Endothelial cell of umbilical vein (primary cell): ENCODE measurements at regions of chr6 and their contacts with region 1.

Region 1: DNA sequence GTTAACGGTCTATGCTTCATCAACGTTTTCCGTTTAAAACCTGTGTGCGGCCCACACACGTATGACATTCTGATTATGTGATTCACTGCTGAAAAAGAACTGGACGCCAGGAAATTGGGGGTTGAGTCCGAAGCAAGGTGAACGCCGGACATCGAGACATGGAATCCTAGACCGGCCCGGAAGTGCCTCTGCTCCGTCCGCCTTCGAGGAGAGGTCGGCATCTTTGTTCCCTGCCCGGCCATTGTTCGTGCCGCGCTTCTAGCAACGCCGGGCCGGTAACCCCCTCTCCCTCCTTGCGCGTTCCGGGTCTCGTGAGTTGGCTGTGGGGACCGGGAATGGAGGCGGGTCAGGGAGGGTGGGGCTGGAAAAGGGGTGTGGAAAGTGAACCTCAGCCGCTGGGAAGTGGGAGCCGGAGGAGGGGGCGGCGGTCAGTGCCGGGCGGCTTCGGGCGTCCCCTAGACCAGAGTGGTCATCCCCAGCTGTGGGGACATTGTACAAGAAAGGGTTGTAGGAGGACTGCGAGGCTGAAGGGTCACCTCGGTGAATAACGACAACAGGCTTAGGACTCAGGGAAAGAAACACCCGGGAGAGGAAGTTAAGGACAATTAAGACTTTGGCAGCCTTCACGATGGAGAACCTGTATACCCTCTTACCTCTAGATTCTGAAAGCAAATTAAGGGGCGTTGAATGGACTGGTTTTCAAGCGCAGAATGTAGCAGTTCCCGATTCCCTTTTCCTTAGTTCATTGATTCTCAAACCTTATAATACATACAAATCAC is at the start of gene ZSCAN9:
- DNase-seq: peak; percentile 89
- H3K4me3 ChIP-seq: peak within 1 kb of the TSS; percentile 48 to 99 (median 86)
- H3K27ac ChIP-seq: peak within 1 kb of the TSS; percentile 77
- H3K4me1 ChIP-seq: peaks cover 10% of the 10 kb centered on the region
- H3K27me3 ChIP-seq: no peaks in the 10 kb centered on the region
- CTCF ChIP-seq: no peak
- POLR2A ChIP-seq: peak; percentile 82
- total RNA-seq, gene ZSCAN9: 18.0 and 18.6 TPM in 2 replicates

Region 2: DNA sequence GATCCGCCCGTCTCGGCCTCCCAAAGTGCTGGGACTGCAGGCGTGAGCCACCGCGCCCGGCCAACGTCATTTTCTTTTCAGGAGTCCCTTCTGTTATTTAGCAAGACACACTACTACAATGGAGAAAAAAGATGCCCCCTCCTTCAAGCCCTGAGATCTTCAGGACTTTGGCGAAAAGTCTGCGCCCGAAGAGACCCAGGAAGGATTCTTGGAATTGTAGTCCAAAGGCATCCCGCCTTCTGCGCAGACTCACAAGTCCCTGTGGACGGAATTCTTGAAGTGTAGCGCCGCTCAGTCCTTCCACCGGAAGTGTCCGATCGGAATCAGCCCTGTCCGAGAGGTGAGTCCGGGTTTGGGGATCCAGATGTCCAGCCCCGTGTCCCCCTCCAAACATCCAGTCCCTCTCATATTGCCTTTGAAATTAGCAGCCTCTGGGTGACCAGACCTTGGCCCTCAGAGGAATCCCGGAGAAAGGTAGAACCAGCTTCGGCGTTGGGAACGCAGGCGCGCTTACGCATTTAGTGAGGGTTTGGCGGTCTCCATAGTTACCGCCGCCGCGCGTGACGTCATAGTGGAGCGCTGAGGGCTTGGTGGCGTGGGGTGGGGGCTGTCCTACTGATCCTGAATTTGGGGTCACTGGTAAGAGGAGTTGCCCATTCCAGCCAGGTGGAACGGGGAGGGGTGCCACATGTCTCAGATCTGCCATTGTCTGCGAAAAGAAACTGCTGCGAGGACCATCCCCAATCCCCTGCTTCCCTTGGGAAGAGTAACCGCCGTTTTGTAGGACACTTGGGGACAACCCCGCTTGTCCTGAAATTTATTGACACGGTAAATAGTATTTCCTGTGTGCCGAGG is 144.4 kb before region 1 on chr6:
- CTCF ChIA-PET with region 1: no interaction called
- POLR2A ChIA-PET with region 1: no interaction called
- dilution Hi-C with region 1: no loop called
- intact Hi-C with region 1: loop called (anchors 5 kb)
- DNase-seq: peak; percentile 97
- H3K4me3 ChIP-seq: peak overlapping the region; percentile 1 to 73 (median 64)
- H3K27ac ChIP-seq: peak overlapping the region; percentile 87
- H3K4me1 ChIP-seq: peaks cover 9% of the 10 kb centered on the region
- H3K27me3 ChIP-seq: no peaks in the 10 kb centered on the region
- CTCF ChIP-seq: no peak
- POLR2A ChIP-seq: peak; percentile 36

Region 3: GRCh38 chr6:28266962-28267694 is 41.9 kb after region 1 on chr6 and contains the start of gene ZSCAN26:
- CTCF ChIA-PET with region 1: no interaction called
- POLR2A ChIA-PET with region 1: interaction called, 3 read pairs
- dilution Hi-C with region 1: no loop called
- intact Hi-C with region 1: loop called (anchors 1 kb)
- DNase-seq: peak; percentile 92
- H3K4me3 ChIP-seq: peak within 1 kb of the TSS; percentile 73 to 96 (median 85)
- H3K27ac ChIP-seq: peak within 1 kb of the TSS; percentile 71
- H3K4me1 ChIP-seq: peaks cover 35% of the 10 kb centered on the region
- H3K27me3 ChIP-seq: peaks cover 0 to 3% of the 10 kb centered on the region in 2 experiments
- CTCF ChIP-seq: no peak
- POLR2A ChIP-seq: peak; percentile 81
- total RNA-seq, gene ZSCAN26: 12.7 and 14.1 TPM in 2 replicates

Region 4: GRCh38 chr6:28335564-28336283 is 110.5 kb after region 1 on chr6 and contains the start of gene ZSCAN31:
- CTCF ChIA-PET with region 1: no interaction called
- POLR2A ChIA-PET with region 1: no interaction called
- dilution Hi-C with region 1: no loop called
- intact Hi-C with region 1: loop called (anchors 1 kb)
- DNase-seq: peak; percentile 98
- H3K4me3 ChIP-seq: peak within 1 kb of the TSS; percentile 70 to 79 (median 73)
- H3K27ac ChIP-seq: peak within 1 kb of the TSS; percentile 96
- H3K4me1 ChIP-seq: peaks cover 15% of the 10 kb centered on the region
- H3K27me3 ChIP-seq: no peaks in the 10 kb centered on the region
- CTCF ChIP-seq: no peak
- POLR2A ChIP-seq: peak; percentile 94
- total RNA-seq, gene ZSCAN31: 19.5 and 23.0 TPM in 2 replicates

Region 5: GRCh38 chr6:28537509-28538140 is 312.4 kb after region 1 on chr6:
- CTCF ChIA-PET with region 1: no interaction called
- POLR2A ChIA-PET with region 1: no interaction called
- dilution Hi-C with region 1: no loop called
- intact Hi-C with region 1: no loop called
- DNase-seq: no peak
- H3K4me3 ChIP-seq: peak overlapping the region in 2 of 3 experiments; percentile 33 to 60
- H3K27ac ChIP-seq: no peak overlapping the region
- H3K4me1 ChIP-seq: peaks cover 5% of the 10 kb centered on the region
- H3K27me3 ChIP-seq: peaks cover 0 to 2% of the 10 kb centered on the region in 2 experiments
- CTCF ChIP-seq: no peak
- POLR2A ChIP-seq: no peak